Activated CD4-positive, alpha-beta T cell treated with anti-CD3 and anti-CD28 coated beads, Interleukin-2, amount 10 ng/mL, durations not matched to agents 7 days and 5 days (primary cell): ENCODE measurements at regions of chr9 and their contacts with region 1.

Region 1: DNA sequence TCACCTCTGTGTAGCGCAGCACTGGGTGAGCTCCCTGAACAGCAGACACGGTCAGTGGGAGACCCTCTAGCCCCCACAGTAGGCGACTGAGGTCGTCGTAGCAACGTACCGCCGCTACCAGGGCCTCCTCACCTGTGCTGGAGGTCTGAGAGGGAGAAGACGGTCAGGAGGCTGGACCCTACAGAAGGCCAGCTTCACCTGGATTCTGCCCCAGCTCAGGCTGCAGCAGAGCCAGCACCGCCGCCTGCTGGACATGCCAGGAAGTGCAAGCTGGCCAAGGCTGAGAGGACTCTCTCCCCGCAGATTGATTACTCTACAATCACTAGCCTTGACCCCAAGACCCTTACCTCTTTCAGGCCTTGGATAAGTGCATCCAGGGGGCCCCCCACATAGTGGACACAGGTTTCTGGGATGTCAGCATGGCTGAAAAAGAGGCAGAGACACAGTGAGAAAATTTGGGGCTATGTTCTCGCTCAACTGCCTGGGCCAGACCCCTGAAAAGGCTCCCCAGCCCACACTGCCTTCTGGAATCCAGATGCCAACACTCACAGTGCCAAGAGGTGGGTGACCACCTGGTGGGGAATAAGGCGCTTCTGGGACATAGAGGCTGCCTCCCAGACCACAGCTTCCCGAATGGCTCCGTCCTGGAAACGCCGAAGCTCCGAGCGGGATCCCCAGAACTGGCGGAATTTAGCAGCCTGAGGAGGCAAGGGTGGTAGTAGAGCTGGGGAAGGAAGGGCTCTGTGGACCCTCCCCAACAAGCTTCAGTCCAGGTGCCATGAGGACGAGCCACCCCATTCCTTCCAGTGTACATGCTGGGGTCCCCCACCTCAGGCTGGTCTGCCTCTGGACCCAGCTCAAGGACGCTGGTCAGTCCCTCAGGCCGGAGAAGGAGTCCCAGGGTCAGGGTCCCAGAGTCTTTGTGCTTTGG is 6.9 kb downstream of the NOL6 start:
- DNase-seq: peak; percentile 74
- H3K4me3 Mint-ChIP-seq: no peak overlapping the region
- H3K27ac Mint-ChIP-seq: peak overlapping the region; percentile 69
- H3K4me1 Mint-ChIP-seq: peaks cover 6% of the 10 kb centered on the region
- H3K27me3 Mint-ChIP-seq: no peaks in the 10 kb centered on the region

Region 2: GRCh38 chr9:33255006-33255775 is 211.6 kb before region 1 on chr9:
- CTCF ChIA-PET with region 1: no interaction called
- POLR2A ChIA-PET with region 1: no interaction called
- DNase-seq: no peak
- H3K4me3 Mint-ChIP-seq: no peak overlapping the region
- H3K27ac Mint-ChIP-seq: no peak overlapping the region
- H3K4me1 Mint-ChIP-seq: peaks cover 12% of the 10 kb centered on the region
- H3K27me3 Mint-ChIP-seq: no peaks in the 10 kb centered on the region

Region 3: DNA sequence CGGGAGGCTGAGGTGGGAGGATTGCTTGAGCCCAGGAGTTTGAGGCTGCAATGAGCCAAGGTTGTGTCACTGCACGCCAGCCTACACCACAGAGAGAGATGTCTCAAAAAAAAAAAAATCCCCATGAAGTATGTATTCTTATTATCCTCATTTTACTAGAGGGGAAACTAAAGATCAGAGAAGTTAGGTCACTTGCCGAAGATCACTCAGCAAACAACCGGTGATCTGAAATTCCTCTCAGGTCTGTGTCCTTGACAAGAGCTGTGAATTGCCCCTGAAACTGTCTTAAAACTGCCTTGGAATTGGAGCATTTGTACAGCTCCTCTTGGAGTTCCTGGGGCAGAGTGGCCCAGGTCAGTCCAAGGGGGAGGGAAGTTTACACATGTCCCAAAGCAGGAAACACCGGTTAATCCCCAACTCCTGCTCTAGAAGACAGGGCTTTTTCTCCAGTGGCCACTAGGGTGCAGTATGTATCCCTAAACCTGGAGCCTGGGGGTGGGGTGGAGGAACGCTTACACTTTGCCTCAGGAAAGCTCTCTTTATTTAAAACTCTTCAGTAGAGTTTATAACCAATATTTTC is 92.1 kb before region 1 on chr9:
- CTCF ChIA-PET with region 1: interaction called, 27 read pairs
- POLR2A ChIA-PET with region 1: no interaction called
- DNase-seq: peak; percentile 79
- H3K4me3 Mint-ChIP-seq: no peak overlapping the region
- H3K27ac Mint-ChIP-seq: no peak overlapping the region
- H3K4me1 Mint-ChIP-seq: peaks cover 13% of the 10 kb centered on the region
- H3K27me3 Mint-ChIP-seq: no peaks in the 10 kb centered on the region

Region 4: DNA sequence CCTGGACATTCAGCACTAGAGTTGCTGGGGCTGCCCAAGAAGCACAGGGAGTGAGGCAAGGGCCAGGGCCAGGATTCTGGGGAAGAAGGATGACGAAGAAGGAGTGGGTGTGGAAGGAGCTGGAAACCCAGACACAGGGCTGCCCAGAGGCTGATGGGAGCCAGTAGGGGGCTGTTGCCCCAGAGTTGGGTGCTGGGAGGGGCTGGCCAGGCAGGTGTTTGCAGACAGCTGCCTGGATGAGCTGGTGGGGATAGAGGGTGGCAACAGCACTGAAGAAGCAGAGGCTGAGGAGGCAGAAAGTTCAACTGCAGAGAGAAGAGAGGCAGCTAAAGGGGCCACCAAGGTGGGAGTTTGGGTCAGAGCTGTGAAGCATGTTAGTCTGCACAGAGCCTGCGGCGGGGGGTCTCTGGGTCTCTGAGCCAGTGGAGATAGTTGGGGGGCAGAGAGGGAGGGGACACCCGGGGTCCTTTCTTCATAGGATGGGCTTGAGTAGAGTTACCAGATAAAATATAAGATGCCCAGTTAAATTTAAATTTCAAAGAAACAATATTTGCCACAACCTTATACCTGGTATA is 62.0 kb before region 1 on chr9:
- CTCF ChIA-PET with region 1: interaction called, 29 read pairs
- POLR2A ChIA-PET with region 1: no interaction called
- DNase-seq: no peak
- H3K4me3 Mint-ChIP-seq: no peak overlapping the region
- H3K27ac Mint-ChIP-seq: no peak overlapping the region
- H3K4me1 Mint-ChIP-seq: peaks cover 18% of the 10 kb centered on the region
- H3K27me3 Mint-ChIP-seq: peaks cover 2% of the 10 kb centered on the region

Region 5: DNA sequence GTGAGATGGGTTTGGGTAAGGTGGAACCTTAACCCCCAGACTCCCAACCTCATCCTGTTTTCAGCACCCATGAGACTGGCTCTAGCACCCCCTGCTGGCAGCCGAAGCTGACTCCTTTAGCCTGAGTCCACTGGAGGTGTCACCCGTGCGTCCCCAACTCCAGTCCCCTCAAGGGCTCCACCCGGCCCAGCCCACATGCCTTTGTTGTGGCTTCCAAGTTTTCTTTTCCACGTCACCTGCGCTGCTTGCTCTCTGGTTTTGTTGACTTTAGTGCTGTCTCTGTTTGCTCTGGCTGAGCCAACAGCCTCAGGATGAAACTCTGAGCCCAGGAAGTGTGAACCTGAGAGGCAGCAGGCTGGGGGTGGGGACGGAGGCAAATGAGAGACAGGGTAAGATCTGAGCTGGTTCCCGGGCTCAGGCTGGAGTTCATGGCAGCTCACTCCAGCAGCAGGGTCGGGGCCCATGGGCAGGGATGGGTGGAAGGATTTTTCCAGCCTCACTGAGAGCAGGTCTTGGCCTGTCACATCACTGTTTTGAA is 51.3 kb before region 1 on chr9:
- CTCF ChIA-PET with region 1: interaction called, 24 read pairs
- POLR2A ChIA-PET with region 1: no interaction called
- DNase-seq: peak; percentile 98
- H3K4me3 Mint-ChIP-seq: peak overlapping the region; percentile 59
- H3K27ac Mint-ChIP-seq: peak overlapping the region; percentile 99
- H3K4me1 Mint-ChIP-seq: peaks cover 61% of the 10 kb centered on the region
- H3K27me3 Mint-ChIP-seq: peaks cover 5% of the 10 kb centered on the region

Region 6: DNA sequence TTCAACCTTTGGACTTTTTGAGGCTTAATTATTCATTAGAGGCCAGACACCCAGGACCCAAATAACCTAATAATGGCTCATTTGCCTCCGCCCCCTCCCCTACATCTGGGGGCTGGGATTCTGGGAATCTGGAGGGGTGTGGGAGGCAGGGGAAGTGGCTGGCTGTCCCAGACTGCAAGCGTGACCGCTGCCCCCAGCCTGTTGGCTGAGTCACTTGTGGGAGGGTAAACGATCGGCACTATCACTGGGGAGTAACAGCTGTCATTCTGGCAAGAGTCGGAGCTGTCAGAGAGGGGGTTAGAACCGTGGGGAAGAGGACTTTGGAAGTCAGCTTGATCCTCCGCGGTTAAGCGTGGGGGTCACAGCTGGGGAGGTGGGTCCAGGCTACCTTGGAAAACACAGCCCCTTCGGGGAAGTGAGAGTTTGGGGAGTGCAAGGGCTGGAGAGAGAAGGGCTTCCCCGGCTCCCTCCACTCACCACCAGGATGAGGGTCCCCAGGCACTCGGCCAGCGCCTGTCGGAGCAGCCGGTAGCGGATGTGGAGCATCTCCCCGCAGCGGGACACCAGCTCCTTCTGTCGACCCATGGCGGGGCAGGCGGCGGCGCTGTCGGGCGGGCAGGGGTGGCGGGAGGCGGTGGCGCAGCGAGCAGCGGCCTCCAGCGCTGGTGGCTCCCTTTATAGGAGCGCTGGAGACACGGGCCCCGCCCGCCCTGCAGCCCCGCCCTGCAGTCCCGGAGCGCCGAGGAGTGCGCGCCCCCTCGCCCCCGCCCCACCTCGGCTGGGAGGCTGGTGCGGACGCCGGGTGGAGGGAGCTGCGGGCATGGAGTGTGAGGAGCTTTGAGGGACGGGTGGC is 19.7 kb before region 1 on chr9 and contains the start of gene AQP3:
- CTCF ChIA-PET with region 1: interaction called, 103 read pairs
- POLR2A ChIA-PET with region 1: no interaction called
- DNase-seq: peak; percentile 85
- H3K4me3 Mint-ChIP-seq: peak within 1 kb of the TSS; percentile 94
- H3K27ac Mint-ChIP-seq: peak within 1 kb of the TSS; percentile 97
- H3K4me1 Mint-ChIP-seq: peaks cover 67% of the 10 kb centered on the region
- H3K27me3 Mint-ChIP-seq: no peaks in the 10 kb centered on the region
- total RNA-seq, gene AQP3: 190 to 194 TPM

Region 7: DNA sequence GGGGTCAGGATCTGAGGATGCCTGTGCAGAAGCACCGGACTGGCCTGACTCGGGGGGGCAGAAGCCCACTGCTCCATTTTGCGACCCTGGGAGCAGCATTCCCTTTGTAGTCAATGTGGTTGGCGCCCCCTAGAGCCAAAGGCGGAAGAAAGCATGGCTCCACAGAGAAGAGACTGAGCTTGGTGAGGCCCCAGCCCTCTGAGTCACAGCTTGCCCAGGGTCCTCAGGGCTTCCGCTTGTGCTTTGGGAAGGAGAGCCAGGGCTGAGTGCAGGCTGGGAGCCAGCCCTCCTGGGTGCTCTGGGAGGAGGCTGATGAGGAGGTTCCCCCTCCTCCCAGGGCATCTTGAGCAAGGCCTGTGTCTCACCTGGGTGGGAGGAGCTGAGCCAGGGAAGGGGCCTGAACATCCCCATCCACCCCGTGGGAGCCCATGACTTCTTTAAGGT is 14.0 kb before region 1 on chr9:
- CTCF ChIA-PET with region 1: interaction called, 103 read pairs
- POLR2A ChIA-PET with region 1: no interaction called
- DNase-seq: peak; percentile 57
- H3K4me3 Mint-ChIP-seq: peak overlapping the region; percentile 22
- H3K27ac Mint-ChIP-seq: peak overlapping the region; percentile 94
- H3K4me1 Mint-ChIP-seq: peaks cover 70% of the 10 kb centered on the region
- H3K27me3 Mint-ChIP-seq: no peaks in the 10 kb centered on the region

Region 8: GRCh38 chr9:33480087-33480486 is 13.3 kb after region 1 on chr9:
- CTCF ChIA-PET with region 1: interaction called, 19 read pairs
- POLR2A ChIA-PET with region 1: no interaction called
- DNase-seq: no peak
- H3K4me3 Mint-ChIP-seq: no peak overlapping the region
- H3K27ac Mint-ChIP-seq: no peak overlapping the region
- H3K4me1 Mint-ChIP-seq: peaks cover 2% of the 10 kb centered on the region
- H3K27me3 Mint-ChIP-seq: no peaks in the 10 kb centered on the region

Region 9: DNA sequence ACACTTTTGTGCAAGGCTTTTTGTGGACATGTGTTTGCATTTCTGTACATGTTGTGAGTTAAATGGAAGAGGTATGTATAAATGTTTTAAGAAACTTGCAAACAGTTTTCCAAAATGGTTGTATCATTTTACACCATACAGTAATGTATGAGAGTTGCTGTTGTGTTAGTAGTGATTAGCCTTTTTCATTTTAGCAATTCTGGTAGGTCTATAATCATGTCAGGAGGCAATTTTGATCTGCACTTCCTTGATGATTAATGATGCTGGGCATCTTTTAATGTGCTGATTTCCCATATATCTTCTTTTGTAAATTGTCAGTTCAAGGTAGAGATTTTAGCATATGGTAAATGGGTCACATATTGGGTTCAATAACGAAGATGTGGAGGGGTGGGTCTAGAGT is 144.5 kb after region 1 on chr9:
- CTCF ChIA-PET with region 1: no interaction called
- POLR2A ChIA-PET with region 1: no interaction called
- DNase-seq: no peak
- H3K4me3 Mint-ChIP-seq: no peak overlapping the region
- H3K27ac Mint-ChIP-seq: no peak overlapping the region
- H3K4me1 Mint-ChIP-seq: no peaks in the 10 kb centered on the region
- H3K27me3 Mint-ChIP-seq: peaks cover 35% of the 10 kb centered on the region